Posterior vena cava (tissue), 2 donors: ENCODE measurements at regions of chr1 and their contacts with region 1.

Region 1: DNA sequence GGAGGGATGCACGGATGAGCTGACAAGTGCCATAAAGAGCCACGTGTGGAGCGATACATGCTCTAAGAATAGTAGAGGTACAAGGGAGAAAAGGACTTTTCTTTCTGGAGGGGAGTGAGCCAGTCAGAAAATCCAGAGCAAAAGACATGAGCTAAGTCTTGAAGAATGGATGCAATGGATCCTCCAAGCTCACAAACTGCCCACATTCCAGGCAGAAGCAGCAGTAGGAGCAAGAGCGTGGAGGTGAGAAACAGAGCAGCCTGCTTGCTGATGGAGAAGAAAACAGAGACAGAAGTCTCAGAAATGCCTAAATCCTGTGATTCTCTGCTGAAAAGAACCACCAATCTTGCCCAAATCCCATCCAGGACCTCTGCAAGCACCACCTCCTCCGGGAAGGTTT is 78.2 kb upstream of the RALGPS2 start:
- DNase-seq: no peak

Region 2: DNA sequence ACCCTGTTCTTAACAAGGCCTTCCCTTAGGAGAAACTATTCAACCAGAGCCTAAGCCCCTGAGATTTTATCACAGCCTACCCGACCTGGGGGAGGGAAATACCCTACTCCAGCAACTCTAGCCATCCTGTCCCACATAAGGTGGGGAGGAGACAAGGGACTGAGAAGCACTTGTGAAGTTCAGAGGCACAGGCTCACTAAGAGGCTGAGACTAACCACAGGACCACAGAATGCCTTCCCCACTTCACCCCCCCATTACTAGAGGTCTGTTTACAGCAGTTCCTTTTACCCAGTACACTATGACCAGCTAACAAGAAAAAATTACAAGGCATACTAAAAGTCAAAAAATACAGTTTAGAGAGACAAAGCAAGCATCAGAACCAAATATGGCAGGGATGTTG is 47.1 kb before region 1 on chr1:
- intact Hi-C with region 1: no loop called
- DNase-seq: no peak

Region 3: GRCh38 chr1:178612261-178612660 is 34.6 kb before region 1 on chr1:
- intact Hi-C with region 1: loop called in 1 of 2 experiments (anchors 1 kb)
- DNase-seq: no peak

Region 4: GRCh38 chr1:180116964-180117763 is 1470.3 kb after region 1 on chr1:
- intact Hi-C with region 1: no loop called
- DNase-seq: no peak